Mammary epithelial cell (primary cell): ENCODE measurements at regions of chr19 and their contacts with region 1.

Region 1: DNA sequence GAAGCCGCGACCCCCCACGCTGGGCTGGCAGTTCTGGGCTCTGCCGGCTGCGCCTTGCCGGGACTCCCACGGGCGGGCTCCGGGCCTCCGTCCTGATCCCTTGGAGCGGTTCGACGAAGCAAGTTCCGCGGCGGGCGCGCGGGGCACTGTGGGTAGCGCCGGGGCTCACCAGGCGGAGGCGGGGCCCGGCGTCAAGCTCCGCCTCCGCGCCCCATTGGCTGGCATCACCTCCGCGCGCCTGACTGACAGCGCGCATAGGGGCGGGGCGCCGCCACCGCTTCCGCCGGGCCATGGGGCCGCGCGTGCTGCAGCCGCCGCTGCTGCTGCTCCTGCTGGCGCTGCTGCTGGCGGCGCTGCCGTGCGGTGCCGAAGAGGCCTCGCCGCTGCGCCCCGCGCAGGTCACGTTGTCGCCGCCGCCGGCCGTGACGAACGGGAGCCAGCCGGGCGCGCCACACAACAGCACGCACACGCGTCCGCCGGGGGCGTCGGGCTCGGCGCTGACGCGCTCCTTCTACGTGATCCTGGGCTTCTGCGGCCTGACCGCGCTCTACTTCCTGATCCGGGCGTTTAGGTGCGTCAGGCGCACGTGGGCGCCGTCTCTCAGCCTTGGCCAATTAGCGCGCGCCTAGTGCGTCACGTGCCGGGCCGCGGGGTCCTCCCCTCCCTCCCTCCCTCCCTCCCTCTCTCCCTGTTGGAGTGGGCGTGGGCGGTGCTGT is at the start of gene FAM174C:
- DNase-seq: peak; percentile 96
- H3K4me3 ChIP-seq: peak within 1 kb of the TSS; percentile 72 to 80 (median 75)
- H3K27ac ChIP-seq: peak within 1 kb of the TSS; percentile 72
- H3K4me1 ChIP-seq: peaks cover 35% of the 10 kb centered on the region
- H3K27me3 ChIP-seq: no peaks in the 10 kb centered on the region
- CTCF ChIP-seq: no peak
- total RNA-seq, gene FAM174C: 22.8 to 60.1 TPM

Region 2: GRCh38 chr19:1304197-1304924 is 28.9 kb after region 1 on chr19:
- CTCF ChIA-PET with region 1: no interaction called
- dilution Hi-C with region 1: no loop called
- in situ Hi-C with region 1: no loop called
- intact Hi-C with region 1: no loop called
- DNase-seq: no peak
- H3K4me3 ChIP-seq: no peak overlapping the region
- H3K27ac ChIP-seq: no peak overlapping the region
- H3K4me1 ChIP-seq: no peaks in the 10 kb centered on the region
- H3K27me3 ChIP-seq: no peaks in the 10 kb centered on the region
- CTCF ChIP-seq: no peak

Region 3: DNA sequence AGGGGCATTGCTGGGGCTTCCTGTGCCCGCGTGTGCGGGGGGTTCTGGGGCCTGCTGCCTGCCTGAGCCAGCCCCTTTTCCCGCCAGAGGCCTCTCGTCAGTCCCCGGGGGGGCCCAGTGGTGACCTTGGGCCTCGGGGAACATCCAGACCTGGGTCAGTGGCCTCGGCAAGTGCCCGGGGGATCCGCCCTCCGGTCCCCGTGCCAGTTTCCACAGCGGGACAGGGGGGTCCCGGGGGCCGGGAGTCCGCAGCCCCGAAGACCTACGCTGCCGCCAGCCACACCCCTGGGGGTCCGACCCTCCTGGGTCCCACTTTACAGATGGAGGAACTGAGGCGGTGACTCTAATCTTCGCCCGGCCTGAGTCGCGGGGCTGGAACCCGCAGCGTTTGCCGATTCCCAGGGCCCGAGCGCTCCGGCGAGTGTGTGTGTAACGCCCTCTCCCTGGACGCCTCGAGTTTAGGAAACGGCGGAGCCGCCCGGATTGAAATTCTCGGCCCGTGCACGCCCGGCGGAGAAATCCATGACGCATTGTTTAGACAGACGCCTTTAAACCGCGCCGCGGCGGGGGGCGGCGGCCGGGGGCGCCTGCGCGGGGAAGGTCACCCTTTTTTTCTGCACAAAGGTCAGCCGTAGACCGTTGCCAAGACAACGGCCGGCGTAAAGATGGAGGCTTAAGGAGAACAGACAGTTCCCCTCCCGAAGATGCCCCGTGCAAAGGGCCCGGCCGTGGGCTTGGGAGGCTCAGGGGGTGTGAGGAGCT is 49.6 kb after region 1 on chr19:
- CTCF ChIA-PET with region 1: no interaction called
- dilution Hi-C with region 1: loop called (anchors 5 kb)
- in situ Hi-C with region 1: no loop called
- intact Hi-C with region 1: no loop called
- DNase-seq: peak; percentile 57
- H3K4me3 ChIP-seq: peak overlapping the region in 2 of 3 experiments; percentile 24 to 30
- H3K27ac ChIP-seq: no peak overlapping the region
- H3K4me1 ChIP-seq: peaks cover 10% of the 10 kb centered on the region
- H3K27me3 ChIP-seq: peaks cover 2% of the 10 kb centered on the region
- CTCF ChIP-seq: no peak

Region 4: DNA sequence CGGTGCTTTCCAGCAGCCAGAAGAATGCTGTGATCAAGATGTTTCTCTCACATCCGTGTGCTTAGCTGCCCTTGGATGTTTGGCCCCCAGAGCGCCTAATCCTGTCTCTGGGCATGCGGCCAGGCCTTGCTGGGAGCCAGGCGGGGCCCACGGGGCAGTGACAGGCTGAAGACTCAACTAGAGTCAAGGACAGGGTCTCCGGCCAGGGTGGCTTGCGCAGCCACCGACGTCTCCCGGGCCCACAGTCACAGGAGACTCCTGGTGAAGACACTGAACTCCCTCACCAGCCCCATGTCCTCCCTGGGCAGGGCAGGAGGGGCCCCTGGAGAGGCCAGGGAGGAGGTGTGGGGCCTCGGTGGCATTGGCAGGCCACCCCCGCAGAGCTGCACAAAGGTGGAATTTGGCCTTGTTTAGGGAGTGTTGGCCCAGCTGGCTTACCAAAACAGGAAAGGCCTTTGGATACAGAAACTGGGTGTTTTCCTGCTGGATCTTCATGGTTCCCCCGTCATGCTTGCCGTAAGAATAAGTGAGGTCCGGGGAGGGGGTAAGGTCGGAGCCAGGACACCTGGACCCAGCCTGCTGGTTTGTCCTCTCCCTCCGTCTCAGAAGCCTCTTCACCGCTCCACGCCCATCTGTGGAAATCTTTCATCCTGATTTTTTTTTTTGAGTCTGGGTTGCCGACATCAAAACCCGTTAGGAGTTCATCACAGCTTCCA is 98.3 kb after region 1 on chr19:
- CTCF ChIA-PET with region 1: no interaction called
- dilution Hi-C with region 1: loop called (anchors 5 kb)
- in situ Hi-C with region 1: no loop called
- intact Hi-C with region 1: loop called (anchors 1 kb)
- DNase-seq: no peak
- H3K4me3 ChIP-seq: no peak overlapping the region
- H3K27ac ChIP-seq: no peak overlapping the region
- H3K4me1 ChIP-seq: no peaks in the 10 kb centered on the region
- H3K27me3 ChIP-seq: no peaks in the 10 kb centered on the region
- CTCF ChIP-seq: no peak

Region 5: DNA sequence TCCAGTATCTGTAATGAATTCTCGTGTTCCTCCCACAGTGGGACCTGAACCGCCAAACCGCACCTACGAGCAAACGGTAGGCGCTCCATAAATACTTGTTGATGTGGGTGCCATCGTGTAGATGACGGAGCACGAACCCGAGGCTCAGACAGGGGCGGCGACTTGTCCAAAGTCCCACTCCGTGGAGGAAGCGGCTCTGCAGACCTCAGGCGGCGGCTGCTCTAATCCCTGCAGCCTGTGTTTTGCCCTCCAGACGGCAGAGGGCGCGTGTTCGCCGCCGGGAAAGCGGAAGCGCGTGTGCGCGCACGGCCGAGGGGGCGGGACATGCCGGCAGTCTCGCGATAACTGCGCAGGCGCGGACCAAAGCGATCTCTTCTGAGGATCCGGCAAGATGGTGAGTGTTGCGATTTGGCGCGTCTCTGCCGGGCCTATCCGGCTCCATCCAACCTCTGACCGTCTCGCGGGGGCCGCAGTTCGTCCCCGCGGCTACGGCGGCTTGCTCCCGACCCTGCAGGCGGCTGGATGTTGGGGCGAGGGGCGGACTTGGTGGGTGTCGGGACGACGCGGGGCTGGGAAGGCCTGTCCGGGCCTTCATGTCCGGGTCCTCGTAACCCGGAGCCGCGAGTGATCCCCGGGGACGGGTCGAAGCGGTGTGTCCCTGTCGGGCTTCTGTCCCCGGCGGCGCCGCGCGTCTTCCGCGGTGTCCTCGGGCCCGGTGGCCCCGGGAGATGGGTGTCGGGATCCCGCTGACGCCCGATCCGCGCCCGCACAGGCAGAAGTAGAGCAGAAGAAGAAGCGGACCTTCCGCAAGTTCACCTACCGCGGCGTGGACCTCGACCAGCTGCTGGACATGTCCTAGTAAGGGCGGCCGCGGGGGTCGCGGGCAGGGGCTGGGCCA is 162.9 kb after region 1 on chr19 and contains the start of gene RPS15:
- CTCF ChIA-PET with region 1: no interaction called
- dilution Hi-C with region 1: loop called (anchors 5 kb)
- in situ Hi-C with region 1: no loop called
- intact Hi-C with region 1: loop called (anchors 2 kb)
- DNase-seq: peak; percentile 91
- H3K4me3 ChIP-seq: peak within 1 kb of the TSS; percentile 87 to 99 (median 89)
- H3K27ac ChIP-seq: peak within 1 kb of the TSS; percentile 81
- H3K4me1 ChIP-seq: peaks cover 23% of the 10 kb centered on the region
- H3K27me3 ChIP-seq: no peaks in the 10 kb centered on the region
- CTCF ChIP-seq: peak; percentile 87 to 95
- total RNA-seq, gene RPS15: 318 to 950 TPM

Region 6: DNA sequence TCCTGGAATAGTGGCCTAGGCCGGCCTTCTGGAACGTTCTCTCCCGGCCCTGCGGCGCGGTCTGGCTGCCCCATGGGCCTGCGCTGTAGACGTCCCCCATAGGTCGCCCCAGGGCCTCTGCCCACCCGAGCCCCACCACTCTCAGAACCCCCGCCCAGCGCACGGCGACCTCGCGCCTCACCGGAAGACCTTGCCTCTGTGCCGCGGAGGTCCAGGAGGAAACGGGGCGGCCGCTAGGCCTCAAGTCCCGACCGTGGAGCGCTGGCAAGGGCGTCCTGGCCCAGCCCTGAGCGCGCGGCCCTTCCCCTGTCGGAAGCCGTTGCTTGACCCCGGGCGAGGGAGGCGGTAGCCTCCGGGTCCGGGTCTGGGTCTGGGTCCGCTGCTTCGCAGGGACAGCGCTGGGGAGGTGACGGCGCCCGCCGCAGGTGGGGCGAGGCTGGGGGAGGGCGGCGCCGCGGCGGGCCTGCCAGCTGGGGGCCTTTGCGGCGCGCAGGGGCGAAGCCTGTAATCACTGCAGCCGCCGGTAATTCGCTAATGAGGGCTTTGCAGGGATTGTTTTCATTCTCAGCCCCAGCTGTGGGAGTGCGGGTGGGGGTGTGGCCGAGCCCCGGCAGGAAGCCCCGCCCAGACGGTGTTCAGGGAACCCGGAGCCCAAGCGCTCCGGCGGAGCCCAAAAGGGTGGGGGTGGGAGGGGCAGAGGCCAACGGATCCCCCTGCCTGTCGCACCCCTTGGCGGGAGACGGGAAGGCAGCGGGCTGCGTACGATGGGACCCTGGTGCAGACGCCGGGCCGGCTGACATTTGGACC is 195.0 kb after region 1 on chr19:
- CTCF ChIA-PET with region 1: no interaction called
- dilution Hi-C with region 1: loop called (anchors 5 kb)
- in situ Hi-C with region 1: no loop called
- intact Hi-C with region 1: no loop called
- DNase-seq: no peak
- H3K4me3 ChIP-seq: peak overlapping the region in 2 of 3 experiments; percentile 5 to 26
- H3K27ac ChIP-seq: no peak overlapping the region
- H3K4me1 ChIP-seq: peaks cover 56% of the 10 kb centered on the region
- H3K27me3 ChIP-seq: peaks cover 26% of the 10 kb centered on the region
- CTCF ChIP-seq: no peak

Region 7: DNA sequence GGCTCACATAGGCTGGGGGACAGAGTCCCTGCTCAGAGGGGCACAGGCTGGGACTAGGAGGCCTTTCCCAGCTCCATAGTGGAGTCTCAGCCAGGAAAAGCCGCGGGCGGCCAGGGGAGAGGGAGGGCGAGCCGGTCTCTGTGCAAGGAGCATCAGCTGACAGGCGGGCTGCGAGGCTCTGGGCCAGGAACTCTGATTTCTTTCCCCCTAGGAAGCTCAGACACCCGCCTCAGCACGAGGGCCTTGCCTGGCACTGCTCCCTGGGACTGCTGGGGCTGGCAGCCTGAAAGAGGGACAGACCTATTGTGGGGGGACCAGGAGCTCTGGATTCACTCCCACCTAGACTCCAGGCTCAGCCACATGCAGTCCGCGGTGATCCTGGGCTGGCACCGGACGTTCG is 246.2 kb after region 1 on chr19:
- CTCF ChIA-PET with region 1: no interaction called
- dilution Hi-C with region 1: loop called (anchors 5 kb)
- in situ Hi-C with region 1: no loop called
- intact Hi-C with region 1: no loop called
- DNase-seq: no peak
- H3K4me3 ChIP-seq: no peak overlapping the region
- H3K27ac ChIP-seq: no peak overlapping the region
- H3K4me1 ChIP-seq: no peaks in the 10 kb centered on the region
- H3K27me3 ChIP-seq: peaks cover 13% of the 10 kb centered on the region
- CTCF ChIP-seq: no peak